ENCODE measurements at regions of chr7 and their contacts with region 1.

Region 1: GRCh38 chr7:20474249-20474648 is 141.2 kb upstream of the ABCB5 start:
- DNase-seq: no peak
- ATAC-seq: no peak
- H3K4me3 Mint-ChIP-seq: no peak overlapping the region
- H3K27ac Mint-ChIP-seq: no peak overlapping the region
- H3K4me1 Mint-ChIP-seq: no peaks in the 10 kb centered on the region
- H3K27me3 Mint-ChIP-seq: peaks cover 2% of the 10 kb centered on the region
- CTCF ChIP-seq: no peak

Region 2: DNA sequence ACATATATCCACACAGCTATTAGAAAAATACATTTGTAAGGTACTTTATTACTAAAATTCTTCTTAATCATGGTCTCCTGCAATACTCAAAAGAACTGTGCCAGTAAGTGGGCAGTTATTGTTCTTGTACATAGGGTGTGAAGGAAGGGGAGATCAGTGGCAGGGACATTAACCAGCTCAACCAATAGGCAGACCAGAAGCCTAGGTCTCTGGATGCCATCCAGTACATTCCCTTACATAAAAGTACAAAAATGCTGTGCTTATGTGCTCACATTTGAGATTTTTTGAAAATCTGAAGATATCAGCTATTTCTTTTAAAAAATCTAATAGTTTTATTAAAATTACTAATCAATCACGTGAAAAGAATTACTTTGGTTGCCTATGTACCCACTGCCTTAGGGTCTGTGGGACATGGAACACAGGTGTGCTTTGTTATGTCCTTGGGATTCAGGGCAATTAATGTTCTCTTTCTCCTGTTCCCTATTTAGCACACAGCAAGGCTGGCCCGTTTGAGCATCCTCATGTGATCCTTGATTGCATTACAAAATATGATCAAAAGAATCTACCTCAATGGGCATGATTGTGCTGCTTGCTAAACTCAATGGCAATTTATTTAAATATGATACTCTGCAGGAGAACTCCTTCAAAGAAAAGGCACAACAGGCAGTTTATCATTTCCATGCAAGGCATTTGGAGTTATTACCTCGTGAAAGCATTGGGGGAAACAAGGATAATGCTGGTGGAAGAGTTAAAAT is 1379.5 kb before region 1 on chr7:
- CTCF ChIA-PET with region 1: no interaction called
- POLR2A ChIA-PET with region 1: interaction called, 15 read pairs
- intact Hi-C with region 1: no loop called
- DNase-seq: no peak
- ATAC-seq: no peak
- H3K4me3 Mint-ChIP-seq: no peak overlapping the region
- H3K27ac Mint-ChIP-seq: no peak overlapping the region
- H3K4me1 Mint-ChIP-seq: no peaks in the 10 kb centered on the region
- H3K27me3 Mint-ChIP-seq: peaks cover 18% of the 10 kb centered on the region
- CTCF ChIP-seq: no peak